ENCODE measurements at regions of chr1 and their contacts with region 1.

Region 1: GRCh38 chr1:27662707-27663393 is 9.1 kb downstream of the IFI6 start:
- DNase-seq: peak; percentile 82 to 96 (median 90)
- ATAC-seq: peak; percentile 72
- H3K4me3 ChIP-seq: peak overlapping the region; percentile 50 to 59
- H3K4me3 Mint-ChIP-seq: peak overlapping the region; percentile 81
- H3K27ac ChIP-seq: peak overlapping the region; percentile 87 to 95
- H3K27ac Mint-ChIP-seq: peak overlapping the region; percentile 97
- H3K4me1 ChIP-seq: peaks cover 46% of the 10 kb centered on the region
- H3K4me1 Mint-ChIP-seq: peaks cover 46% of the 10 kb centered on the region
- H3K27me3 ChIP-seq: no peaks in the 10 kb centered on the region
- H3K27me3 Mint-ChIP-seq: no peaks in the 10 kb centered on the region
- CTCF ChIP-seq: peak; percentile 74

Region 2: GRCh38 chr1:27234049-27234882 is 428.6 kb before region 1 on chr1 and contains the start of gene WDTC1:
- CTCF ChIA-PET with region 1: no interaction called
- POLR2A ChIA-PET with region 1: no interaction called
- intact Hi-C with region 1: loop called in 1 of 2 experiments (anchors 10 kb)
- DNase-seq: peak; percentile 97 to 99 (median 98)
- ATAC-seq: peak; percentile 90
- H3K4me3 ChIP-seq: peak within 1 kb of the TSS; percentile 58 to 66
- H3K4me3 Mint-ChIP-seq: peak within 1 kb of the TSS; percentile 99
- H3K27ac ChIP-seq: peak within 1 kb of the TSS; percentile 74 to 93
- H3K27ac Mint-ChIP-seq: peak within 1 kb of the TSS; percentile 95
- H3K4me1 ChIP-seq: peaks cover 25% of the 10 kb centered on the region
- H3K4me1 Mint-ChIP-seq: peaks cover 37% of the 10 kb centered on the region
- H3K27me3 ChIP-seq: no peaks in the 10 kb centered on the region
- H3K27me3 Mint-ChIP-seq: no peaks in the 10 kb centered on the region
- CTCF ChIP-seq: no peak
- total RNA-seq, gene WDTC1: 17.8 to 18.1 TPM

Region 3: DNA sequence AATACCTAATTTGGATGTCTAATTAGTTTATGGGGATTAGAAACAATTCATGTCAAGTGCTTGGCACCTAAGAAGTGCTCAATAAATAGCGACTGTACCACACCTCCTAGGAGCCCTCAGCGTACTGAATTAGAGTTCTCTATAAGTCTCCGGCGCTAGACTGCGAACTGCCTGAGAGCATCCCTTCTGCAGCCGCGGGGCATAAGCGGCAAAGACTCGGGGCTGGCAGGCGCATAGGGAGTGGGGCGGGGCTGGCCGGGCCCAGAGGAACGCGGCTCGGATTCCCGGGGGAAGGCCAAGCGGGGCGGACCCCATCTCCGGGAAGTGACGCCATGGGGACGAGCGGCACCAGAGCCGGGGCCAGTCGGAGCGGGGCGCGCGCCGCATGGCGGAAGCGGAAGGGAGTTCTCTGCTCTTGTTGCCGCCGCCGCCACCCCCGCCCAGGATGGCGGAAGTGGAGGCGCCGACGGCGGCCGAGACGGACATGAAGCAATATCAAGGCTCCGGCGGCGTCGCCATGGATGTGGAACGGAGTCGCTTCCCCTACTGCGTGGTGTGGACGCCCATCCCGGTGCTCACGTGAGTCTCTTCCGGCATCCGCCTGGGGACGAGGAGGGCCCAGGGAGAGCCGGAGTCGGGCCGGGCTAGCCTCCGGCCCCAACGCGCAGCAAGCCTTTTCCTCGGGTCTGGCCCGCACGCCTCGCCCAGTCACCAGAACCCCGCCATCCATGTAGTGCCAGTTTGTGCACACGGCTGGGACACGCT is 340.9 kb before region 1 on chr1 and contains the start of gene TMEM222:
- CTCF ChIA-PET with region 1: interaction called, 3 read pairs
- POLR2A ChIA-PET with region 1: no interaction called
- intact Hi-C with region 1: loop called in 1 of 2 experiments (anchors 2 kb)
- DNase-seq: peak; percentile 95 to 99 (median 97)
- ATAC-seq: peak; percentile 93
- H3K4me3 ChIP-seq: peak within 1 kb of the TSS; percentile 95 to 99
- H3K4me3 Mint-ChIP-seq: peak within 1 kb of the TSS; percentile 98
- H3K27ac ChIP-seq: peak within 1 kb of the TSS; percentile 88 to 95
- H3K27ac Mint-ChIP-seq: peak within 1 kb of the TSS; percentile 97
- H3K4me1 ChIP-seq: peaks cover 40% of the 10 kb centered on the region
- H3K4me1 Mint-ChIP-seq: peaks cover 48% of the 10 kb centered on the region
- H3K27me3 ChIP-seq: no peaks in the 10 kb centered on the region
- H3K27me3 Mint-ChIP-seq: no peaks in the 10 kb centered on the region
- CTCF ChIP-seq: no peak
- total RNA-seq, gene TMEM222: 24.1 to 25.2 TPM

Region 4: GRCh38 chr1:27473755-27474154 is 189.1 kb before region 1 on chr1:
- CTCF ChIA-PET with region 1: no interaction called
- POLR2A ChIA-PET with region 1: no interaction called
- intact Hi-C with region 1: no loop called
- DNase-seq: peak in 1 of 9 experiments; percentile 33
- ATAC-seq: peak; percentile 58
- H3K4me3 ChIP-seq: no peak overlapping the region
- H3K4me3 Mint-ChIP-seq: peak overlapping the region; percentile 54
- H3K27ac ChIP-seq: no peak overlapping the region
- H3K27ac Mint-ChIP-seq: peak overlapping the region; percentile 64
- H3K4me1 ChIP-seq: peaks cover 50% of the 10 kb centered on the region
- H3K4me1 Mint-ChIP-seq: peaks cover 75% of the 10 kb centered on the region
- H3K27me3 ChIP-seq: no peaks in the 10 kb centered on the region
- H3K27me3 Mint-ChIP-seq: no peaks in the 10 kb centered on the region
- CTCF ChIP-seq: no peak

Region 5: DNA sequence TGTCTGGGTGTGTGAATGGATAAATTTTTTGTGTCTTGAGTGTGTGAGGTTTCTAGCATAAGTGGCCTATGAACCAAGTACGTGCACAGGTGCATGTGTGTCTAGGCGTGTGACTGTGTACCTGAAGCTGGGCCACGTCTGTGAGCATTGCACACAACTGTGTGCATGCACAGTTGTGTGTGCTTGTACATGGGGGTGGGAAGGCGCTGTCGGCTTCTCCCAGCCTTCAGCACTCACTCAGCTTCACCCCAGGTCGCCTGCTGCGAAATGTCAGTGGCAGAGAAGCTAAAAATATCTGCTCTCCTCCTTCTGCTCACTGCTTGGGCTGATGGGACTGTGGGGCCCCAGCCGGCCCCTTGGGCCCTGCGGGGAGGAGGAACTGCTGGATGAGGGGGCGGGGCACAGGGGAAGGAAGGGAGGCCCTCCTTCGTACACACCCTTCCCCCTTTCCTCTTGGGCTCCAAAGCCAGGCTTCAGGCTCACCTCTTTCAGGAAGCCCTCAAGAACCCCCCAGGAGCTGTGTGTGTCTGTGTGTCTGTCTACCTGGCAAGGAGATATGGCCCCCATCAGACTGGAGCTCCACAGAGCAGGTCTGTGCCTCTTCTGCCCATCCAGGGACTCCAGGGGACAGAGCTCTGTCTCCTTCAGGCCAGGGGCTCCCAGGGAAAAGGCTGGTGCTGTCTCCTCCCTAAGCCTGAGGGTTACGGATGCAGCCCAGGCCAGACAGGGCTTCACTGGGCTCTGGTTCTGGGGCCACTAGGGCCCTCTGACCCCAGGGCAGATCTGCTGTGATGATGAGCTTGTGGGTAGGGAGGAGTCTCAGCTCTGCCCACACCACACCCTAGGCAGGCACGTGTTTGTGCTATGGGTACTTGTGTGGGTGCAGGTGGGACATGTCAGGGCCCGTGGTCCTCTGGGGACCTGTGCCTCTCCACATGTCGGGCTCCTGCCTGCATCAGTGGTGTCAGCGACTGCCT is 137.3 kb before region 1 on chr1:
- CTCF ChIA-PET with region 1: interaction called, 15 read pairs
- POLR2A ChIA-PET with region 1: interaction called, 10 read pairs
- intact Hi-C with region 1: loop called in 1 of 2 experiments (anchors 2 kb)
- DNase-seq: peak in 8 of 9 experiments; percentile 25 to 74 (median 49)
- ATAC-seq: no peak
- H3K4me3 ChIP-seq: peak overlapping the region; percentile 21 to 47
- H3K4me3 Mint-ChIP-seq: peak overlapping the region; percentile 66
- H3K27ac ChIP-seq: peak overlapping the region; percentile 63 to 66
- H3K27ac Mint-ChIP-seq: peak overlapping the region; percentile 85
- H3K4me1 ChIP-seq: peaks cover 63% of the 10 kb centered on the region
- H3K4me1 Mint-ChIP-seq: peaks cover 73% of the 10 kb centered on the region
- H3K27me3 ChIP-seq: no peaks in the 10 kb centered on the region
- H3K27me3 Mint-ChIP-seq: no peaks in the 10 kb centered on the region
- CTCF ChIP-seq: no peak

Region 6: DNA sequence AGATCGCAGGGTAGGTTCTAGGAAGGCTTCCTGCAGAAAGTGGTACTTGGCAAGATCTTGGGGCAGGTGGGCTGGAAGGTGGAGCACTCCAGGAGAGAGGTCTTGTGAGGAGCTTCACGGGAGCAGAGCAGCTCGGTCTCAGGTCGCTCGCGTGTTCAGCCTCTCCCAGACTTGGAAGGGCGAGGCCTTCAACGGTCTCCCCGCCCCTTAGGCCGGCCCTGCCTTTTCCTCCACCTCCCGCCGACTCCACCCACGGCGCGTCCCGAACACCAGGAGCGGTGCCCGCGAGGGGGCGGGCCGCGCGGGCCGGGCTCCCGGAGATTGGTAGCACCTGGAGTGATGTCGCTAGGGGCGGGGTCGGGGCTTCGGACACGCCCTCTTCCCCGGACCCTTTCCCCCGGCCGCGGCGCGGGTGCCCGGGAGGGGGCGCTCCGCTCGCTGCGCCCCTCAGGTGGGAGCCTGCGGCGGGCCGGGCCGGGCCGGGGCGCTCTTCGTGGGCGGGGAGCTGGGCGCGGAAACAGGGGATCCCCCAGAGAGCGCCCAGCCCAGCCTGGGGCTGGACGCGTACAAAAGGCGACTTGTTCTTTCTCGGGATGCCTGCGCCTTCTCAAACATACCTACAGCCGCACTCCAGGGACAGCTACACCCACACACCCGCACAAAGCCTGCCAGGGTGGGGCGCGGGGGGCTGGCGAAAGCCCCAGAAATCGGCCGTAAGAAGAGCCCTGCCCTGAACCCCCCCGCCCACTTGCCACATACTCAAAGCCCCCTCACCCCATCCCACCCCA is 94.4 kb before region 1 on chr1:
- CTCF ChIA-PET with region 1: interaction called, 13 read pairs
- POLR2A ChIA-PET with region 1: interaction called, 3 read pairs
- intact Hi-C with region 1: loop called (anchors 1 kb)
- DNase-seq: peak; percentile 80 to 96 (median 91)
- ATAC-seq: peak; percentile 92
- H3K4me3 ChIP-seq: peak overlapping the region; percentile 28 to 36
- H3K4me3 Mint-ChIP-seq: peak overlapping the region; percentile 78
- H3K27ac ChIP-seq: peak overlapping the region in 1 of 2 experiments; percentile 58
- H3K27ac Mint-ChIP-seq: peak overlapping the region; percentile 39
- H3K4me1 ChIP-seq: peaks cover 16% of the 10 kb centered on the region
- H3K4me1 Mint-ChIP-seq: peaks cover 25% of the 10 kb centered on the region
- H3K27me3 ChIP-seq: no peaks in the 10 kb centered on the region
- H3K27me3 Mint-ChIP-seq: no peaks in the 10 kb centered on the region
- CTCF ChIP-seq: peak; percentile 71

Region 7: GRCh38 chr1:27616441-27616840 is 46.4 kb before region 1 on chr1:
- CTCF ChIA-PET with region 1: interaction called, 405 read pairs
- POLR2A ChIA-PET with region 1: interaction called, 17 read pairs
- intact Hi-C with region 1: no loop called
- DNase-seq: peak in 1 of 9 experiments; percentile 19
- ATAC-seq: no peak
- H3K4me3 ChIP-seq: no peak overlapping the region
- H3K4me3 Mint-ChIP-seq: no peak overlapping the region
- H3K27ac ChIP-seq: peak overlapping the region in 1 of 2 experiments; percentile 80
- H3K27ac Mint-ChIP-seq: peak overlapping the region; percentile 84
- H3K4me1 ChIP-seq: peaks cover 65% of the 10 kb centered on the region
- H3K4me1 Mint-ChIP-seq: peaks cover 65% of the 10 kb centered on the region
- H3K27me3 ChIP-seq: no peaks in the 10 kb centered on the region
- H3K27me3 Mint-ChIP-seq: no peaks in the 10 kb centered on the region
- CTCF ChIP-seq: no peak

Region 8: GRCh38 chr1:27650539-27651175 is 12.2 kb before region 1 on chr1:
- CTCF ChIA-PET with region 1: interaction called, 50 read pairs
- POLR2A ChIA-PET with region 1: interaction called, 6 read pairs
- intact Hi-C with region 1: no loop called
- DNase-seq: peak in 1 of 9 experiments; percentile 11
- ATAC-seq: no peak
- H3K4me3 ChIP-seq: no peak overlapping the region
- H3K4me3 Mint-ChIP-seq: no peak overlapping the region
- H3K27ac ChIP-seq: no peak overlapping the region
- H3K27ac Mint-ChIP-seq: peak overlapping the region; percentile 6
- H3K4me1 ChIP-seq: peaks cover 8% of the 10 kb centered on the region
- H3K4me1 Mint-ChIP-seq: peaks cover 14% of the 10 kb centered on the region
- H3K27me3 ChIP-seq: no peaks in the 10 kb centered on the region
- H3K27me3 Mint-ChIP-seq: no peaks in the 10 kb centered on the region
- CTCF ChIP-seq: no peak

Measured in CD8-positive, alpha-beta T cell (primary cell).